ENCODE measurements at regions of chr11 and their contacts with region 1.

Region 1: GRCh38 chr11:72497731-72498130 is 63.4 kb upstream of the CLPB start:
- DNase-seq: no peak
- ATAC-seq: no peak

Region 2: DNA sequence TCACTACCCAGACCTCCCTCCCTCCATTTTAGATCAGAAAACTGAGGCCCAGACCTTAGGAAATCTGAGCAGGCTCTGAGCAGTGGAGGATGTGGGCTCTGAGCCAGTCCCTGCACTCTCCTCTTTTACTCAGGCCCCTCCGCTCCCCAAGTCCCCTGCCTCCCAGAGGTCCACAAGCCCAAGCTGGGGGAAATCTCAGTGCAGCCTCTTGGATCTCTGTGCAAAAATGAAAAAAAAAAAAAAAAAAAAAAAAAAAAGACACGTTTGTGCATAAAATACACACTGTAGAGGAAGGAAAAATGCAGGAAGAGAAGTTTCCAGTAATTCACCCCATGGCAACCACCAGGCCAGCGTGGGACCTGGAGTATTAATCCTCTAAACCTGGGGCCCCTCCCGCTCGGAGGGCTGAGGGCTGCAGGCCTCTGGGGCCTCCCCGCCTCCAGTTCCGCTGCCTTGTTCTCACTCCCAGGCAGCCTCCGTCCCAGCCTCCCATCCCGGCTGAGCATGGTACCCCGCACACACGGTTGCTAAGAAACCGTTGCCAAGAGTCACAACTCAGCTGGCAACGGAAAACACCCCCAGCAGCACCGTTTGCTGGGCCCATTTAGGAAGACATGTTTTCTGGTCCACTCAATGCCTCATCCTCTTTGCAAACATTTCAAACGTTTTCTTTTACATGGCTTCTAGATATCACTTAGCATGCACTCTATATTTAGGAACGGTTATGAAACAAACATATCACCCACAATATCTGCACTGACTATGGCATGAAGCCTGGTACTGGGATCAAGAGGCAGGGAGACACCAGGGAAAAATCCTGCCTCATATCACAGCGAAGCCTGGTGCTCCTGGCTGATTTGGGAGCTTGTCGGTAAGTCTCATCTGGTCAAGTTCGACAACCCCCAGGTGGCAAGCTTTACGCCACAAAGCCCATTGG is 1871.9 kb before region 1 on chr11:
- intact Hi-C with region 1: no loop called
- DNase-seq: no peak
- ATAC-seq: no peak

Region 3: GRCh38 chr11:72263361-72263760 is 234.4 kb before region 1 on chr11:
- intact Hi-C with region 1: no loop called
- DNase-seq: no peak
- ATAC-seq: no peak

Region 4: DNA sequence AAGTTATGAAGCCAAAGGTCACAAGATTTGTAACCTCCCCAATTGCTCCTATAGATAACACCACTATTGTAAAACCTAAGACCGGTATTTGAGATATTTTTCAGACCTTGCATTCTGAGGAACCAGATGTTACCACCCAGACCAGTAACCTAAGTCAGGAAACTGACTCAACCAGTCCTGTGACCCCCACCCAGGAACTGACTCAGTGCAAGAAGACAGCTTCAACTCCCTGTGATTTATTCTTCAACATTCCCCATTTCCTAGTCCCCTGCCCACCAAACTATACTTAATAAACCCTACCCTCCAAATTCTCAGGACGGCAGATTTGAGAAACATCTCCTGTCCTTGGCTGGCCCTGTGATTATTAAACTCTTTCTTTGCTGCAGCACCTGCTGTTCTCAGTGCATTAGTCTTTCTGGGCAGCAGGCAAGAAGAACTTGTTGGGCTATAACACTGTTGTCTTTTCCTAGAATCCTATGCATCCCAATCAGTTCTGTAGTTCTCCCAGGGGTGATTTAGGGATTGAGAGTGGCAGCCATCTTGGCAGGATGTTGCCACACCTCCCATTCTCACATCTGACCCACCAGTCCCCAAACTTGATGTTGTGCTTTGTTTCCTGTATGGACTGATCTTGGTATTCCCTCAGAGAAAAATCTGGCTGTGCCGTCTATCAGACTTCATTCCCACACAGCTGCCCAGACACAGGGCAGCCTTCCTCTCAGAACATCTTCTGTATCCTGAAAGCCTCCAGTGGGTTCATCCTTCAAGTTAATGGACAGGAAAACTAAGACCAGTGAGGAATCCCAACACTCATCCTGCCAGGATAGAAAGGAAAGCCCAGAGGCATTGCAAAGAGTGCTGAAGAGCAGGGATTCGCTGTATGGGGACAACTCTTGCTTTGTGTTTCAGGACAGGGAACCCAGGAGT is 72.5 kb after region 1 on chr11:
- intact Hi-C with region 1: loop called (anchors 2 kb)
- DNase-seq: no peak
- ATAC-seq: no peak

Region 5: DNA sequence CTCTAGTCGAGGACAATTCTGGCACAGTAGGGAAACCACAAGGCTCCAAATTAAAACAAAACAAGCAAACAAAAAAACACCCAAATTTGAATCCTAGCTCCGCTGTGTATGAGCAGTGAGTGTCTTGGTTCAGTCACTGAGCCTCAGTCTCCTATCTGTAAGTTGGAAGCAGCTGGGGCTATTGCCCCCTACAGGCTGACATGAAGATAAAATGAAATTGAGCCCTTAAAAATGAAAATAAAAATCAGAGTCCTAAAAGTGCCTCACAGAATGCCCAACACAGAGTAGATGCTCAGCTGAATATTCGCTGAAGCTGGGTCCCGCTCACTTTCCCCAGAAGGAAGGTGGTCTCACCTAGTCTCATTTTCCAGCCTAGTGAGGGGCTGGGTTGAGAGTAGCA is 111.3 kb after region 1 on chr11:
- intact Hi-C with region 1: no loop called
- DNase-seq: no peak
- ATAC-seq: no peak

Measured in sciatic nerve (tissue), 2 donors.